Activated CD4-positive, alpha-beta memory T cell treated with anti-CD3 and anti-CD28 coated beads for 36 hours (primary cell): ENCODE measurements at regions of chr7 and their contacts with region 1.

Region 1: GRCh38 chr7:150378853-150379440 is at the start of gene ZNF775:
- DNase-seq: peak; percentile 95
- H3K4me3 Mint-ChIP-seq: peak within 1 kb of the TSS; percentile 81
- H3K27ac Mint-ChIP-seq: peak within 1 kb of the TSS; percentile 72
- H3K4me1 Mint-ChIP-seq: peaks cover 42% of the 10 kb centered on the region
- H3K27me3 Mint-ChIP-seq: no peaks in the 10 kb centered on the region
- total RNA-seq, gene ZNF775: 6.0 to 6.8 TPM

Region 2: GRCh38 chr7:150368096-150368883 is 10.7 kb before region 1 on chr7 and contains the start of gene REPIN1:
- CTCF ChIA-PET with region 1: interaction called, 4 read pairs
- POLR2A ChIA-PET with region 1: interaction called, 28 read pairs
- intact Hi-C with region 1: loop called (anchors 1 kb)
- DNase-seq: peak; percentile 88
- H3K4me3 Mint-ChIP-seq: peak within 1 kb of the TSS; percentile 95
- H3K27ac Mint-ChIP-seq: peak within 1 kb of the TSS; percentile 95
- H3K4me1 Mint-ChIP-seq: peaks cover 30% of the 10 kb centered on the region
- H3K27me3 Mint-ChIP-seq: no peaks in the 10 kb centered on the region
- total RNA-seq, gene REPIN1: 52.3 to 56.9 TPM

Region 3: GRCh38 chr7:150420987-150421674 is 42.2 kb after region 1 on chr7:
- CTCF ChIA-PET with region 1: no interaction called
- POLR2A ChIA-PET with region 1: no interaction called
- intact Hi-C with region 1: loop called (anchors 5 kb)
- DNase-seq: peak; percentile 91
- H3K4me3 Mint-ChIP-seq: no peak overlapping the region
- H3K27ac Mint-ChIP-seq: no peak overlapping the region
- H3K4me1 Mint-ChIP-seq: peaks cover 5% of the 10 kb centered on the region
- H3K27me3 Mint-ChIP-seq: no peaks in the 10 kb centered on the region